Activated CD4-positive, alpha-beta T cell treated with anti-CD3 and anti-CD28 coated beads for 36 hours (primary cell): ENCODE measurements at regions of chr13 and their contacts with region 1.

Region 1: GRCh38 chr13:44758630-44759383 is 182.7 kb upstream of the TSC22D1 start:
- DNase-seq: peak; percentile 70
- ATAC-seq: peak; percentile 99
- H3K4me3 Mint-ChIP-seq: no peak overlapping the region
- H3K27ac Mint-ChIP-seq: peak overlapping the region; percentile 48
- H3K4me1 Mint-ChIP-seq: peaks cover 24% of the 10 kb centered on the region
- H3K27me3 Mint-ChIP-seq: peaks cover 2% of the 10 kb centered on the region

Region 2: DNA sequence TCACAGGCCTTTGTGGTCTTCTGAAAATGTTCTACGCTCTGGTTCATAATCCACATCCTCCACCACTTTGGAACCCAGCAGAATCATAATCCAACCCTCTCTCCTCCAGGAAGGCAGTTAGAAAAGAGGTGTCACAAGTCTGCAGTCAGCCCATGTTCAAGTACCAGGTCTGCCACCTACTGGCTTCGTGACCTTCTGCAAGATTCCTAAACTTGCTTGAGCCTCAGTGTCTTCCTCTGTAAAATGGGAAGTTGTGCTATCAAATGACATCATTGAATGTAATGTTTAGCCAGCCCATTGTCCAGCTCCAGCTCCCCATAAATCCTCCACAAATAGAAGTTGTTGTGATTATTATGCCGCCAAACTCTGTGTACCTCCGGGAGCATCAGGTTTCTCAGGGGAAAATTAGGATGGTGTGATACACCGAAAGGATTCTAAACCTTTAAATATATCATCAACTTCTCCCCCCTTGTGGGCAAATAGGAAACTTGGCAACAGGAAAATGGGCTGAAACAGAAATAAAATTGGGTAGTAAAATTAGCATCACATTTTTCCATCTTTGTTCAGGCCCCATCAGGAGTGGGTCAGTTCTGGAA is 120.8 kb after region 1 on chr13:
- CTCF ChIA-PET with region 1: interaction called, 3 read pairs
- POLR2A ChIA-PET with region 1: no interaction called
- intact Hi-C with region 1: loop called in 1 of 2 experiments (anchors 10 kb)
- DNase-seq: peak; percentile 45
- ATAC-seq: no peak
- H3K4me3 Mint-ChIP-seq: no peak overlapping the region
- H3K27ac Mint-ChIP-seq: no peak overlapping the region
- H3K4me1 Mint-ChIP-seq: peaks cover 5% of the 10 kb centered on the region
- H3K27me3 Mint-ChIP-seq: peaks cover 5% of the 10 kb centered on the region